Endothelial cell of umbilical vein (primary cell): ENCODE measurements at regions of chr14 and their contacts with region 1.

Region 1: DNA sequence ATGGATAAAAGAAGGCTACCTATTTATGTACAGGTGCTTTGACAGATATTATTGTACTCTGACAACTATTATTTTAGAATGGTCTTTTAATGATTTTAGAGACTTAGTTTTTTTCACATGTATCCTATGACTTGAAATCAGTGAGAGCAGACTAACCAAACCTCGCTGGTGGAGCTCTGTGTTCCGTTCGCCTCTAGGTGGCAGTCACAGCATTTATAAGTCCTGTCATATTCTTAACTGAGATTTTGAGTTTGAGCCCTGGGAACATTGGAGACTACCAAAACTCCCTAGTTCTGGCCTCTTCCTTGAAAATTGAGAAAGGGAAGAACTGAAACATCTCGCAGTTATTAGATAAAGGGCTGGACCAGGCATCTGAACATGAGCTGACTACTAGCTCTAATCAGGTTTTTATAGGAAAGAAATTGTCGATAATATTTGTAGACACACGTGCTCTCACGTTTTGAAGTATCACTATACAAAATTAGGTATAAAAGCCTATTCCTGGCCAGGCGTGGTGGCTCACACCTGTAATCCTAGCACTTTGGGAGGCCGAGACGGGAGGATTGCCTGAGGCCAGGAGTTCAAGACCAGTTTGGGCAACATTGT is 48.3 kb downstream of the TTLL5 start:
- DNase-seq: peak; percentile 79
- H3K4me3 ChIP-seq: no peak overlapping the region
- H3K27ac ChIP-seq: no peak overlapping the region
- H3K4me1 ChIP-seq: no peaks in the 10 kb centered on the region
- H3K27me3 ChIP-seq: no peaks in the 10 kb centered on the region
- CTCF ChIP-seq: peak; percentile 72 to 75
- POLR2A ChIP-seq: no peak

Region 2: GRCh38 chr14:75648066-75648838 is 61.1 kb before region 1 on chr14:
- CTCF ChIA-PET with region 1: no interaction called
- POLR2A ChIA-PET with region 1: no interaction called
- dilution Hi-C with region 1: no loop called
- intact Hi-C with region 1: no loop called
- DNase-seq: peak; percentile 93
- H3K4me3 ChIP-seq: no peak overlapping the region
- H3K27ac ChIP-seq: peak overlapping the region; percentile 29
- H3K4me1 ChIP-seq: peaks cover 16% of the 10 kb centered on the region
- H3K27me3 ChIP-seq: no peaks in the 10 kb centered on the region
- CTCF ChIP-seq: no peak
- POLR2A ChIP-seq: no peak

Region 3: GRCh38 chr14:75697386-75697785 is 11.9 kb before region 1 on chr14:
- CTCF ChIA-PET with region 1: interaction called, 20 read pairs
- POLR2A ChIA-PET with region 1: no interaction called
- dilution Hi-C with region 1: no loop called
- intact Hi-C with region 1: no loop called
- DNase-seq: no peak
- H3K4me3 ChIP-seq: no peak overlapping the region
- H3K27ac ChIP-seq: no peak overlapping the region
- H3K4me1 ChIP-seq: no peaks in the 10 kb centered on the region
- H3K27me3 ChIP-seq: no peaks in the 10 kb centered on the region
- CTCF ChIP-seq: no peak
- POLR2A ChIP-seq: no peak

Region 4: GRCh38 chr14:75783184-75783583 is 73.9 kb after region 1 on chr14:
- CTCF ChIA-PET with region 1: interaction called, 11 read pairs
- POLR2A ChIA-PET with region 1: no interaction called
- dilution Hi-C with region 1: no loop called
- intact Hi-C with region 1: no loop called
- DNase-seq: no peak
- H3K4me3 ChIP-seq: no peak overlapping the region
- H3K27ac ChIP-seq: no peak overlapping the region
- H3K4me1 ChIP-seq: peaks cover 3% of the 10 kb centered on the region
- H3K27me3 ChIP-seq: no peaks in the 10 kb centered on the region
- CTCF ChIP-seq: no peak
- POLR2A ChIP-seq: no peak

Region 5: GRCh38 chr14:75995372-75996041 is 286.2 kb after region 1 on chr14:
- CTCF ChIA-PET with region 1: interaction called, 14 read pairs
- POLR2A ChIA-PET with region 1: no interaction called
- dilution Hi-C with region 1: loop called (anchors 25 kb)
- intact Hi-C with region 1: no loop called
- DNase-seq: no peak
- H3K4me3 ChIP-seq: no peak overlapping the region
- H3K27ac ChIP-seq: no peak overlapping the region
- H3K4me1 ChIP-seq: no peaks in the 10 kb centered on the region
- H3K27me3 ChIP-seq: no peaks in the 10 kb centered on the region
- CTCF ChIP-seq: no peak
- POLR2A ChIP-seq: no peak

Region 6: DNA sequence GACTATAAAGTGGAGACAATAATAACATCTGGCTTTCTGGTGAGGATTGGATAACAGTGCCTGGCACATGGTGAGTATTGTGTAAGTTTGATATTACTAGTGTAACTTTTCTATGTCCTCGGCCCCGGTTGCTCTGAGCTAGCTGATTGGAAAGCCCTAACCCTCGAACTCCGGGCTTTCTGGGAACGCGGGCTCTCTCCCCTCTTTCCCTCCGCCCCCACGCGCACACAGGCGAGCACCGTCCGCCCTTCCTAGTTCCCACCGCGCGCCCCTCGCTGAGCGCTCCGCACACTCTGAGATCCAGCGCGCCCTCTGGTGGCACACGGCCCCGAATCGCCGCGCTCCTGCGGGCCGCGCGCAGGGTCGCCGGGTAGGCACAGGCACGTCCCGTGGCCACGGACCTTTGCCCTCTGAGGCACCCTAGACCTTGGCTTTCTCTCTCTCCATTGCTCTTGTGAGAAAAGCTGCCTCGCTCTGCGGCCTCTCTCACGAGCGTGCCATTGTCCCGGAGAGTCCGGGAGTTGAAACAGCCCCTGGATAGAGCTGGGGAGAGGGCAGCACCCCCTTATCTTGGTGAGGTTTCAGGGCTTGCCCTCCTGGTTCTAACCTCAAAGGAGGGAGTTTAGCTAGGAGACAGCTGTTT is 643.5 kb after region 1 on chr14:
- CTCF ChIA-PET with region 1: interaction called, 22 read pairs
- POLR2A ChIA-PET with region 1: no interaction called
- dilution Hi-C with region 1: no loop called
- intact Hi-C with region 1: no loop called
- DNase-seq: peak; percentile 37
- H3K4me3 ChIP-seq: no peak overlapping the region
- H3K27ac ChIP-seq: no peak overlapping the region
- H3K4me1 ChIP-seq: peaks cover 18% of the 10 kb centered on the region
- H3K27me3 ChIP-seq: peaks cover 0 to 7% of the 10 kb centered on the region in 2 experiments
- CTCF ChIP-seq: peak; percentile 88 to 93
- POLR2A ChIP-seq: no peak